GM12878 (cell line): ENCODE measurements at regions of chr3 and their contacts with region 1.

Region 1: GRCh38 chr3:32510075-32510724 is 7.5 kb upstream of the CMTM6 start:
- DNase-seq: no peak
- ATAC-seq: peak; percentile 97
- H3K4me3 ChIP-seq: no peak overlapping the region
- H3K27ac ChIP-seq: no peak overlapping the region
- H3K4me1 ChIP-seq: no peaks in the 10 kb centered on the region
- H3K27me3 ChIP-seq: no peaks in the 10 kb centered on the region
- CTCF ChIP-seq: peak; percentile 77 to 95 (median 83)
- EP300 ChIP-seq: no peak
- POLR2A ChIP-seq: no peak
- RAD21 ChIP-seq: peak; percentile 100

Region 2: DNA sequence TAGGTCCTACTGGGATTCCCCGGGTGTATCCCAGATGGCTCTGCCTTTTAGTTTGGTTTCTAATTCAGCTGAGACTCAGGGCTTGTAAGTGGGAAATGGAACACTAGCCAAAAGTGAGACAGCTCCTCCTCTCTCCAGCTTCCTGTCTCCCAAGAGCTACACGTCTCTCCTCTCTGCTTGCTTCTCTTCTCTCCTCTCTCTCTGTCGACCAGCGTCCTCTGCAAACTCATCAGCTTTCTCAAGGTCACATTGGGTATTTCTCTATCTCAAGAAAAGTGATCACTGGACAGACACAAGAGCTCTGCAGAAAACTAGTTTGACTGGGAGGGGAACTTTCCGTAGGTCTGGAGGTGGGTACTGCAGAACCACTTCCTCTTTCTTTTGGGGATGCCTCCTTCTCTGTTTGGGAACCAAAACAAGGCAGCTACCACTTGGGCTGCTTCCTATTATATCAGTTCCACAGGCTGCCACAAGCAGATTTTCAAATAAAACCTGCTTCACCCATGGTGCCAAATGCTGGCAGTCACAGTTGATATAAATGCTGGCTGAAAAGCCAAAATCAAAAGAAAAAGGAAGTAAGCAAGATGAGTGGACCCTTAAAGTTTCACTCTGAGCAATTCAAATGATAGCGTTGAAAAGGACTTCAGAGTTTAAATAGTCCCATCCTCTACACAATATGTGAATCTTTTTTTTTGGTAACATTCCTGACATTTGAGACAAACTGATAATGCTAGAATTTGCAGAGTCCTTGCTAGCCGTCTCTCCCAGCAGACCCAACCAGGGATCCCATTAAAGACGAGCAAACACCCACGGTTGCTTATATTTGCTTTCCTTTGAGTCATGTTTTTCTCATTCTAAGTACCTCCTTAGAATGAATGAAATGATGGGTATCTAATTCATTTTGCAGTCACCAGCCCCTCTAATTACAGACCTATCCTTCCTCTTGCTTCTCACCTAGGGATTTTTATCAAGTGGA is 67.7 kb after region 1 on chr3:
- CTCF ChIA-PET with region 1: interaction called, 5 read pairs
- POLR2A ChIA-PET with region 1: no interaction called
- RAD21 ChIA-PET with region 1: no interaction called
- SMC1A ChIA-PET with region 1: interaction called, 4 read pairs
- in situ Hi-C with region 1: no loop called
- intact Hi-C with region 1: loop called (anchors 5 kb)
- DNase-seq: peak; percentile 66
- ATAC-seq: peak; percentile 97
- H3K4me3 ChIP-seq: peak overlapping the region; percentile 43; the same call in 1 of the 2 replicates
- H3K27ac ChIP-seq: peak overlapping the region; percentile 82
- H3K4me1 ChIP-seq: peaks cover 9% of the 10 kb centered on the region; the same call in 1 of the 2 replicates
- H3K27me3 ChIP-seq: no peaks in the 10 kb centered on the region
- CTCF ChIP-seq: no peak
- EP300 ChIP-seq: peak; percentile 56 to 80
- POLR2A ChIP-seq: no peak
- RAD21 ChIP-seq: no peak

Region 3: DNA sequence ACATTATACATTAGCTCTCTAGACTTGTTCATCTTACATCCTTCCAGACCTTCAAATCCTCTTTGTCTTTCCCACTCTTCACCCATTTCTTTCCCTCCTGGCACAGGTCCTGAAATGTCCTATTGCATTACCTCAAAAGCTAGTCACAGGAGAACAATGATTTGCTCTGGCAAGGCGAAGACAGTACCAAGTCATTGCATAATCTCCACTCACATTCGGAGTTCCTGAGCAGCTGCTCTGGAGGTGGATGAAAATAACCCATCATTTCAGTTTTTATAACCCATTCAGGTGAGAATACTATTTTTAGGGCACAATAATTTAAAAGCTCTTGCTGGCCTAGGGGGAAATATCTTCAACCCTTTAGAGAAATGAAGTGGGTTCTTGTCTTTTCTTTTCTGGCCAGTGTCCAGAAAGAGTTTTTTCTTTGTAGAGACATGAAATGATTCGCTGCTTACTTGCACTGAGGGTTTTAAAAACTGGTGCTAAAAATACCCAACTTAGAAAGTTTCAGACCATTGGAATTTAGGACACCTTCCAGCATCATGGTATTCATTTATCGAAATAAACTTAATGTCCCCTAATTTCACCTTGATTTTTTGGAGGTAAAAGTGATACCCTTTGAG is 83.8 kb after region 1 on chr3:
- CTCF ChIA-PET with region 1: interaction called, 26 read pairs
- POLR2A ChIA-PET with region 1: interaction called, 3 read pairs
- RAD21 ChIA-PET with region 1: interaction called, 6 read pairs
- SMC1A ChIA-PET with region 1: interaction called, 7 read pairs
- in situ Hi-C with region 1: no loop called
- intact Hi-C with region 1: no loop called
- DNase-seq: no peak
- ATAC-seq: no peak
- H3K4me3 ChIP-seq: no peak overlapping the region
- H3K27ac ChIP-seq: no peak overlapping the region
- H3K4me1 ChIP-seq: no peaks in the 10 kb centered on the region
- H3K27me3 ChIP-seq: peaks cover 0 to 3% of the 10 kb centered on the region in 2 experiments; a peak in 1 of 4 replicates
- CTCF ChIP-seq: no peak
- EP300 ChIP-seq: no peak
- POLR2A ChIP-seq: no peak
- RAD21 ChIP-seq: no peak

Region 4: DNA sequence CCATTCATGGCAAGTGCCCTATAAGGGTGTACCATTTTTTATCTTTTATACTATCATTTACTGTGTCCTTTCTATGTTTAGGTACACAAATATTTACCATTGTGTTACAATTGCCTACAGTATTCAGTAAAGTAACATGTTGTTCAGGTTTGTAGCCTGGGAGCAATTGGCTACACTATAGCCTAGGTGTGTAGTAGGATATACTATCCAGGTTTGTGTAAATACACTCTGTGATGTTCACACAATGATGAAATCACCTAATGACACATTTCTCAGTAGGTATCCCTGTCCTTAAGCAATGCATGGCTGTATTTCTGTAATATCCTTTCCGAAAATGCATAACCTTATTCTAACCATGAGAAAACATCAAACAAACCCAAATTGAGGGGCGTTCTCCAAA is 156.9 kb after region 1 on chr3:
- CTCF ChIA-PET with region 1: interaction called, 22 read pairs
- POLR2A ChIA-PET with region 1: no interaction called
- RAD21 ChIA-PET with region 1: interaction called, 10 read pairs
- SMC1A ChIA-PET with region 1: interaction called, 7 read pairs
- in situ Hi-C with region 1: loop called (anchors 5 kb)
- intact Hi-C with region 1: loop called (anchors 1 kb)
- DNase-seq: no peak
- ATAC-seq: no peak
- H3K4me3 ChIP-seq: no peak overlapping the region
- H3K27ac ChIP-seq: no peak overlapping the region
- H3K4me1 ChIP-seq: no peaks in the 10 kb centered on the region
- H3K27me3 ChIP-seq: peaks cover 0 to 2% of the 10 kb centered on the region in 2 experiments; a peak in 2 of 4 replicates
- CTCF ChIP-seq: no peak
- EP300 ChIP-seq: no peak
- POLR2A ChIP-seq: no peak
- RAD21 ChIP-seq: no peak

Region 5: DNA sequence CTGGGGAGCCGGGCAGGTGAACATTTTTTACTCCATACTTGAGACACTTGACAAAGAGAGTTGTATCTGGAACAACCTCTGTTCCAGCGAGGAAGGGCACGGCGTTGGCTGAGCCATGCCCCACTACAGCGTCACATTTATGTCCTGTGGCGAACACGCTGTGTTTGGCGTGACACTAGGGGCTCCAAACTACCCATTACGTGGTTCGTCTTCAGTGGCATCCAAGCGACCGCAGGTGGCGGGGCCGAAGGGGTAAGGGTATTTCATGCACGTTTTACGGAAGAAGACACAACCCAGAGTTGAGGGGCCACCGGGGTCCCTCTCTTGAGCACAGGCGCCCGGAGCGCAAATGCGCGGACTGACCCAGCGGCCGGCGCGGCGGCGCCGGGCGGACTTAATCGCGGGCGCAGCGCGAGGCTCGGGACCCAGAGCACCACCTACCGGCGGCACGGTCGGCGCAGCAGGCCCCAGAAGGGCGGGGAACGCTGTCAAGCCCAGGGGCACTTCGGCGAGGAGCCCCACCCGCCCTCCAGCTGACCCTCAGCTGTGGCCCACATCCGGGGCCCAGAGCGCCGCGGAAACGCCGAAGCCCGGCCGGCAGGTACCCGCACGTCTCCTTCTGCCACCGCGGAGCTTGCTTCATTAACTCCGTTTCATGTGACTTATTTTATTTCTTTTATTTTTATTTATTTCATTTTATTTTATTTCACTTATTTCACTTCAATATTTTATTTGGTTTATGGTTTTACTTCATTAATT is 271.2 kb after region 1 on chr3:
- CTCF ChIA-PET with region 1: interaction called, 3 read pairs
- POLR2A ChIA-PET with region 1: no interaction called
- RAD21 ChIA-PET with region 1: interaction called, 4 read pairs
- SMC1A ChIA-PET with region 1: interaction called, 4 read pairs
- in situ Hi-C with region 1: no loop called
- intact Hi-C with region 1: loop called (anchors 10 kb)
- DNase-seq: peak; percentile 26
- ATAC-seq: peak; percentile 99
- H3K4me3 ChIP-seq: peak overlapping the region; percentile 66
- H3K27ac ChIP-seq: no peak overlapping the region
- H3K4me1 ChIP-seq: no peaks in the 10 kb centered on the region
- H3K27me3 ChIP-seq: no peaks in the 10 kb centered on the region
- CTCF ChIP-seq: peak; percentile 77 to 87 (median 86)
- EP300 ChIP-seq: no peak
- POLR2A ChIP-seq: no peak
- RAD21 ChIP-seq: peak; percentile 51

Region 6: GRCh38 chr3:32934150-32934742 is 424.0 kb after region 1 on chr3:
- CTCF ChIA-PET with region 1: interaction called, 9 read pairs
- POLR2A ChIA-PET with region 1: no interaction called
- RAD21 ChIA-PET with region 1: interaction called, 5 read pairs
- SMC1A ChIA-PET with region 1: interaction called, 3 read pairs
- in situ Hi-C with region 1: loop called (anchors 10 kb)
- intact Hi-C with region 1: loop called (anchors 5 kb)
- DNase-seq: no peak
- ATAC-seq: peak; percentile 68
- H3K4me3 ChIP-seq: no peak overlapping the region
- H3K27ac ChIP-seq: no peak overlapping the region
- H3K4me1 ChIP-seq: no peaks in the 10 kb centered on the region
- H3K27me3 ChIP-seq: no peaks in the 10 kb centered on the region; a peak in 1 of 4 replicates
- CTCF ChIP-seq: peak; percentile 59 to 73 (median 70)
- EP300 ChIP-seq: no peak
- POLR2A ChIP-seq: no peak
- RAD21 ChIP-seq: peak; percentile 80